ENCODE measurements at regions of chr9 and their contacts with region 1.

Region 1: GRCh38 chr9:613771-614347 is 227.6 kb upstream of the DMRT1 start:
- DNase-seq: peak; percentile 70
- ATAC-seq: peak; percentile 53
- H3K4me3 ChIP-seq: no peak overlapping the region
- H3K4me3 Mint-ChIP-seq: peak overlapping the region; percentile 8
- H3K27ac ChIP-seq: no peak overlapping the region
- H3K27ac Mint-ChIP-seq: no peak overlapping the region
- H3K4me1 ChIP-seq: peaks cover 0 to 4% of the 10 kb centered on the region in 2 donors
- H3K4me1 Mint-ChIP-seq: peaks cover 8% of the 10 kb centered on the region
- H3K27me3 ChIP-seq: no peaks in the 10 kb centered on the region
- H3K27me3 Mint-ChIP-seq: no peaks in the 10 kb centered on the region
- CTCF ChIP-seq: peak; percentile 76

Region 2: GRCh38 chr9:257957-258356 is 355.9 kb before region 1 on chr9:
- CTCF ChIA-PET with region 1: no interaction called
- POLR2A ChIA-PET with region 1: no interaction called
- intact Hi-C with region 1: no loop called
- DNase-seq: no peak
- ATAC-seq: peak; percentile 33
- H3K4me3 ChIP-seq: no peak overlapping the region
- H3K4me3 Mint-ChIP-seq: no peak overlapping the region
- H3K27ac ChIP-seq: no peak overlapping the region
- H3K27ac Mint-ChIP-seq: peak overlapping the region; percentile 12
- H3K4me1 ChIP-seq: peaks cover 0 to 6% of the 10 kb centered on the region in 2 donors
- H3K4me1 Mint-ChIP-seq: peaks cover 21% of the 10 kb centered on the region
- H3K27me3 ChIP-seq: no peaks in the 10 kb centered on the region
- H3K27me3 Mint-ChIP-seq: no peaks in the 10 kb centered on the region
- CTCF ChIP-seq: no peak

Region 3: GRCh38 chr9:589723-590122 is 24.1 kb before region 1 on chr9:
- CTCF ChIA-PET with region 1: no interaction called
- POLR2A ChIA-PET with region 1: no interaction called
- intact Hi-C with region 1: no loop called
- DNase-seq: no peak
- ATAC-seq: no peak
- H3K4me3 ChIP-seq: no peak overlapping the region
- H3K4me3 Mint-ChIP-seq: no peak overlapping the region
- H3K27ac ChIP-seq: no peak overlapping the region
- H3K27ac Mint-ChIP-seq: no peak overlapping the region
- H3K4me1 ChIP-seq: no peaks in the 10 kb centered on the region
- H3K4me1 Mint-ChIP-seq: peaks cover 4% of the 10 kb centered on the region
- H3K27me3 ChIP-seq: no peaks in the 10 kb centered on the region
- H3K27me3 Mint-ChIP-seq: peaks cover 3% of the 10 kb centered on the region
- CTCF ChIP-seq: no peak

Region 4: DNA sequence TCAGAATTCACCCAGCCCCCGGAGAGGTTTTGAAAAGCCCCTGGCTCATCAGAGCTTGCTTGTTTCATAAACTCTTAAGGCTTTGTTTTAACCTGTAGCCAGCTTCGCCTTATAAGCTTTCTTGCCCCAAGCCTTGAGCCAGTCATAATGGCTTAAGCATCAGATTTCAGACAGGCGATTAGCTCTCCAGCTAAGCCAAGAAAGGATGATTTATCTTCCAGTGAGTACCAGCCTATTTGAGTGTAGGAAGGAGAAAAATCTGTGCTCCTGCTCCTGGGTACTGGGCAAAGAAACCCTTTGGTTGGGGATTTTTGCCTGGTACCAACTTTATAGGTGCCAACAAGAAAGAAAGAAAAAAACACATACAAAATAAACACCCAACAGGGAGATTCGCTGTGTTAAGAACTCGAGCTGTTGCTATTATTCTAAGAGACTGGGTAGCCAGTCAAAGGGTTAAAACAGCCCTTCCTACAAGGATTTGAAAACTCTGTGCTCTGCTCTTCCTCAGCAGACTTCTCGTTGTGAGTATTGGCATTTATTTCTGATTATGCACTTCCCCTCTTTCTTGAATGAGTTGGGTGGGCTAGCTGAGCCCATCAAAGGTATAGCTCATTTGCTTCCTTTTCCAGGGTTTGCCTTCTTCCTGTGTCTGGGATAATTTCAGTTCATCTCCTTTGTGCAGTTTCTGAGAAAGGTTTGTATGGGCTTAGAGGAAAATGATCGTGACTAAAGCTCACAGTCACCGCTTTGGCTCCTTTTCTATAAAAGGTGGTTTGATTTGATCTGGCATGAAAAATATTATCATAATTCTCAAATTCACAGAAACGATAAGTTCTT is 70.4 kb after region 1 on chr9:
- CTCF ChIA-PET with region 1: no interaction called
- POLR2A ChIA-PET with region 1: no interaction called
- intact Hi-C with region 1: no loop called
- DNase-seq: no peak
- ATAC-seq: no peak
- H3K4me3 ChIP-seq: no peak overlapping the region
- H3K4me3 Mint-ChIP-seq: no peak overlapping the region
- H3K27ac ChIP-seq: no peak overlapping the region
- H3K27ac Mint-ChIP-seq: no peak overlapping the region
- H3K4me1 ChIP-seq: peaks cover 3 to 9% of the 10 kb centered on the region in 2 donors
- H3K4me1 Mint-ChIP-seq: peaks cover 11% of the 10 kb centered on the region
- H3K27me3 ChIP-seq: no peaks in the 10 kb centered on the region
- H3K27me3 Mint-ChIP-seq: peaks cover 4% of the 10 kb centered on the region
- CTCF ChIP-seq: no peak

Region 5: DNA sequence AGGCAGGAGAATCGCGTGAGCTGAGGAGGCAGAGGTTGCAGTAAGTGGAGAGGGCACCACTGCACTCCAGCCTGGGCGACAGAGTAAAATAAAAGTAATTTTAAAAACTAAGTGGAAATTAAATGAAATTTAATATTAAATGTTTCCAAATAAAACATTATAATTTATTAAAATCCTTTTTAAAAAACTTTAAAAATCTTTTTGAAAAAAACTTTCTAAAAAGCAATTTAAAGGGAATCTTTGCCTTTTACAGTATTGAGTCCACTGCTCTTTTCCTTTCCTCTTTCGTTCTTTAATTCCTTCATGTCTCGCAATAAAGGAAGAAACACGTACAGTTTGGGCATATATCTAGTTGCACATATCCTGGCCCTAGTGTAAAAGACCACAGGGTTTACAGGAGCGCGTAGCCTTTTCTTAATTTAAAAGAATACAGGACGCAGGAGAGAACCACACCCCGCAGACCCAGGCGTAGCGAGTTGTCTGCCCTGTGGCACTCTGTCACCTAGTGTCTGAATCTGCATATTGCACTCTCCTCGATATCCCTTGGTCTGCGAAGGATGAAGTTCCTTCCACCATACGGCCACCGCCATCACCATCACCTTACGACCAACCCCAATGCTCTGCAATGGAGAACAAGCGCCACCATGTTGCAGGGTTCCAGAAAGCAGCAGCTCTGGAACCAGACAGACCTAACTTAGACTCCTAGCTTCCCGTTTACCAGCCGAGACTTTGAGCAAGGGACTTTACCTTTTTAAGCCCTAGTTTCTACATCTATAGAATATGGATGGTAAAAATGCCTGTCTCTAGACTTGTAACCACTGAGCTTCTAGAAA is 150.0 kb after region 1 on chr9:
- CTCF ChIA-PET with region 1: no interaction called
- POLR2A ChIA-PET with region 1: no interaction called
- intact Hi-C with region 1: loop called (anchors 1 kb)
- DNase-seq: peak; percentile 60
- ATAC-seq: peak; percentile 72
- H3K4me3 ChIP-seq: no peak overlapping the region
- H3K4me3 Mint-ChIP-seq: peak overlapping the region; percentile 14
- H3K27ac ChIP-seq: no peak overlapping the region
- H3K27ac Mint-ChIP-seq: no peak overlapping the region
- H3K4me1 ChIP-seq: no peaks in the 10 kb centered on the region
- H3K4me1 Mint-ChIP-seq: peaks cover 6% of the 10 kb centered on the region
- H3K27me3 ChIP-seq: peaks cover 0 to 8% (median 1%) of the 10 kb centered on the region in 4 experiments
- H3K27me3 Mint-ChIP-seq: peaks cover 40% of the 10 kb centered on the region
- CTCF ChIP-seq: peak; percentile 52

Region 6: GRCh38 chr9:1009101-1009707 is 395.3 kb after region 1 on chr9:
- CTCF ChIA-PET with region 1: interaction called, 11 read pairs
- POLR2A ChIA-PET with region 1: no interaction called
- intact Hi-C with region 1: loop called (anchors 1 kb)
- DNase-seq: peak; percentile 74
- ATAC-seq: peak; percentile 89
- H3K4me3 ChIP-seq: no peak overlapping the region
- H3K4me3 Mint-ChIP-seq: no peak overlapping the region
- H3K27ac ChIP-seq: no peak overlapping the region
- H3K27ac Mint-ChIP-seq: no peak overlapping the region
- H3K4me1 ChIP-seq: peaks cover 3% of the 10 kb centered on the region in 2 donors
- H3K4me1 Mint-ChIP-seq: no peaks in the 10 kb centered on the region
- H3K27me3 ChIP-seq: peaks cover 0 to 17% (median 0%) of the 10 kb centered on the region in 4 experiments
- H3K27me3 Mint-ChIP-seq: peaks cover 46% of the 10 kb centered on the region
- CTCF ChIP-seq: peak; percentile 93

Region 7: DNA sequence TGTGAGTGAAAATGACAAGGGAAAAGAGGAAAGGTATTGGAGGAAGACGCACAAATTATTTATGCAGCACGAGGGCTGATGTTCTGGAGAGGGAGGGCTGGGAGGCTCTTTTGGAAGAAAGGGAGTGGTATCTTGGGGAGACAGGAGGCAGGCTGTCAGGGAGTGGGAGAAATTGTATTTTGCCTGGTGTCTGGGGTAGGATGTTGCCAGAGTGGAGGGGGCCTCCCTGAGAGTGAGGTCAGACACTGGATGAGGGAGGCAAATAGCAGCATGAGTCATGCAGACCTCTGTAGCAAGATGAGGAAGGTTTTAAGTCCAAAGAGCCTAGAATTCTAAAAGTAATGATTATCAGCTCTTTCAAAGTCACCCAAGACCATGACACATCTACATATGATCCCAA is 594.3 kb after region 1 on chr9:
- CTCF ChIA-PET with region 1: no interaction called
- POLR2A ChIA-PET with region 1: no interaction called
- intact Hi-C with region 1: no loop called
- DNase-seq: no peak
- ATAC-seq: no peak
- H3K4me3 ChIP-seq: no peak overlapping the region
- H3K4me3 Mint-ChIP-seq: no peak overlapping the region
- H3K27ac ChIP-seq: no peak overlapping the region
- H3K27ac Mint-ChIP-seq: no peak overlapping the region
- H3K4me1 ChIP-seq: no peaks in the 10 kb centered on the region
- H3K4me1 Mint-ChIP-seq: no peaks in the 10 kb centered on the region
- H3K27me3 ChIP-seq: no peaks in the 10 kb centered on the region
- H3K27me3 Mint-ChIP-seq: no peaks in the 10 kb centered on the region
- CTCF ChIP-seq: no peak